CD4-positive, alpha-beta memory T cell (primary cell): ENCODE measurements at regions of chr6 and their contacts with region 1.

Region 1: GRCh38 chr6:14210663-14211561 is 93.3 kb downstream of the CD83 start:
- DNase-seq: peak; percentile 87 to 93 (median 90)
- H3K4me3 ChIP-seq: peak overlapping the region; percentile 71 to 90
- H3K4me3 Mint-ChIP-seq: peak overlapping the region; percentile 86 to 92 (median 89)
- H3K27ac ChIP-seq: peak overlapping the region; percentile 45
- H3K27ac Mint-ChIP-seq: peak overlapping the region; percentile 22 to 86 (median 77)
- H3K4me1 ChIP-seq: peaks cover 9% of the 10 kb centered on the region
- H3K4me1 Mint-ChIP-seq: peaks cover 6 to 22% (median 13%) of the 10 kb centered on the region in 4 donors
- H3K27me3 ChIP-seq: no peaks in the 10 kb centered on the region
- H3K27me3 Mint-ChIP-seq: no peaks in the 10 kb centered on the region

Region 2: GRCh38 chr6:14665827-14666724 is 455.2 kb after region 1 on chr6:
- CTCF ChIA-PET with region 1: interaction called, 6 read pairs
- POLR2A ChIA-PET with region 1: no interaction called
- intact Hi-C with region 1: loop called (anchors 1 kb)
- DNase-seq: no peak
- H3K4me3 ChIP-seq: no peak overlapping the region
- H3K4me3 Mint-ChIP-seq: no peak overlapping the region
- H3K27ac ChIP-seq: no peak overlapping the region
- H3K27ac Mint-ChIP-seq: peak overlapping the region in 2 of 7 donors; percentile 30 to 31
- H3K4me1 ChIP-seq: peaks cover 36% of the 10 kb centered on the region
- H3K4me1 Mint-ChIP-seq: peaks cover 14 to 25% (median 16%) of the 10 kb centered on the region in 4 donors
- H3K27me3 ChIP-seq: no peaks in the 10 kb centered on the region
- H3K27me3 Mint-ChIP-seq: no peaks in the 10 kb centered on the region

Region 3: DNA sequence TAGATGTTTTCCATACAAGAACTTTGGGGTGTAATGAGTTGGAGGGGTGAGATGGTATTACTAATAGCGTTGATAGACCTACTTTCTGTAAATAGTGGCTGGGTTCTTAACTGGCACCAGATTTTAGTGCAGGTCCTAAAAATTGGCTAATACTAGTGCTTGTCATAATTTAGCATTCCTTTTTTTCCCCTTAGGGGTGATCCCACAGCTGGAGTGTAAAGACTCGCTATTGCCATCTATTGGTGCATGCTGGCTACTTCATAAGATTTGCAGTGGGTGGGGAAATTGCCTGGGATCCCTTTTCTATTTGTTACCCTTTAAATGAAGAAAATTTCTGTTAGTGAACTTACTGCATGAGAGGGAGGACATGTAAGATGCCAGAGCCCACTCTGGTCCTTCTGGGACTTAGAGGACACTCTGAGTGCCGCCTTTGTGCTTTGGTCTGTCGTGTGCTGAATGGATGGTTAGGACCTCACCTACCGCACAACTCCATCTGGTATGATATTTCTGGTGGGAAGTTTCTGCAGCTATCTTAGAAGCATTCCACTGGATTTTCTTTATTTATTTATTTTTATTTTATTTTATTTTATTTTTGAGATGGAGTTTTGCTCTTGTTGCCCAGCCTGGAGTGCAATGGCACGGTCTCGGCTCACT is 1230.4 kb after region 1 on chr6:
- CTCF ChIA-PET with region 1: interaction called, 4 read pairs
- POLR2A ChIA-PET with region 1: no interaction called
- intact Hi-C with region 1: loop called (anchors 1 kb)
- DNase-seq: peak in 4 of 5 donors; percentile 29 to 46 (median 37)
- H3K4me3 ChIP-seq: no peak overlapping the region
- H3K4me3 Mint-ChIP-seq: no peak overlapping the region
- H3K27ac ChIP-seq: no peak overlapping the region
- H3K27ac Mint-ChIP-seq: peak overlapping the region in 1 of 7 donors; percentile 3
- H3K4me1 ChIP-seq: peaks cover 43% of the 10 kb centered on the region
- H3K4me1 Mint-ChIP-seq: peaks cover 50 to 72% (median 58%) of the 10 kb centered on the region in 4 donors
- H3K27me3 ChIP-seq: no peaks in the 10 kb centered on the region
- H3K27me3 Mint-ChIP-seq: no peaks in the 10 kb centered on the region

Region 4: GRCh38 chr6:15491255-15491985 is 1280.5 kb after region 1 on chr6:
- CTCF ChIA-PET with region 1: interaction called, 3 read pairs
- POLR2A ChIA-PET with region 1: no interaction called
- intact Hi-C with region 1: loop called (anchors 1 kb)
- DNase-seq: peak; percentile 61 to 64 (median 63)
- H3K4me3 ChIP-seq: no peak overlapping the region
- H3K4me3 Mint-ChIP-seq: no peak overlapping the region
- H3K27ac ChIP-seq: no peak overlapping the region
- H3K27ac Mint-ChIP-seq: peak overlapping the region in 6 of 7 donors; percentile 10 to 61 (median 48)
- H3K4me1 ChIP-seq: peaks cover 7% of the 10 kb centered on the region
- H3K4me1 Mint-ChIP-seq: peaks cover 22 to 32% (median 24%) of the 10 kb centered on the region in 4 donors
- H3K27me3 ChIP-seq: no peaks in the 10 kb centered on the region
- H3K27me3 Mint-ChIP-seq: no peaks in the 10 kb centered on the region